Activated CD8-positive, alpha-beta T cell treated with anti-CD3 and anti-CD28 coated beads for 36 hours (primary cell): ENCODE measurements at regions of chr2 and their contacts with region 1.

Region 1: GRCh38 chr2:152025678-152026287 is 73.1 kb downstream of the CACNB4 start:
- DNase-seq: peak; percentile 92
- ATAC-seq: peak; percentile 97
- H3K4me3 Mint-ChIP-seq: peak overlapping the region; percentile 71
- H3K27ac Mint-ChIP-seq: peak overlapping the region; percentile 62
- H3K4me1 Mint-ChIP-seq: peaks cover 5% of the 10 kb centered on the region
- H3K27me3 Mint-ChIP-seq: peaks cover 10% of the 10 kb centered on the region
- CTCF ChIP-seq: peak; percentile 99

Region 2: DNA sequence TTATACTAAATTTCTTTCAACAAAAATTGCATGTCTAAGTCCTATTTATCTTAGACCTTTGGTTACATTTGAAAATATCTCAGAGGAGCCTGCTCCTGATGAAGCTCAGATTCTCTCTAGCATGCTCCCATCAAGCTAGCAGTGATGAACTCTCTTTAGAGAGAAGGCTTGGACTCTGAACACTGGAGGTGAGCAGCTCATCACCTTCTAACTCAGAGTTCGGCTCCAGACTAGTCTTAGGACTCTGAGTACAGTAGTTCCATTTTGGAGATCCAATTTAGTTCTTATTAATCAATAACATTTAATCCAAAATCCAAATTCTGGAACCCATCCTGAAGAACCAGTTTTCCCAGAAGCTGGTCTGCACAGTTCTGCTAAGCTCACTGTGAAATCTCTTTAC is 34.8 kb before region 1 on chr2:
- CTCF ChIA-PET with region 1: interaction called, 16 read pairs
- POLR2A ChIA-PET with region 1: no interaction called
- intact Hi-C with region 1: no loop called
- DNase-seq: no peak
- ATAC-seq: no peak
- H3K4me3 Mint-ChIP-seq: no peak overlapping the region
- H3K27ac Mint-ChIP-seq: no peak overlapping the region
- H3K4me1 Mint-ChIP-seq: no peaks in the 10 kb centered on the region
- H3K27me3 Mint-ChIP-seq: peaks cover 3% of the 10 kb centered on the region
- CTCF ChIP-seq: no peak

Region 3: GRCh38 chr2:152012697-152013096 is 13.1 kb before region 1 on chr2:
- CTCF ChIA-PET with region 1: interaction called, 65 read pairs
- POLR2A ChIA-PET with region 1: no interaction called
- intact Hi-C with region 1: no loop called
- DNase-seq: no peak
- ATAC-seq: no peak
- H3K4me3 Mint-ChIP-seq: no peak overlapping the region
- H3K27ac Mint-ChIP-seq: no peak overlapping the region
- H3K4me1 Mint-ChIP-seq: no peaks in the 10 kb centered on the region
- H3K27me3 Mint-ChIP-seq: no peaks in the 10 kb centered on the region
- CTCF ChIP-seq: no peak

Region 4: DNA sequence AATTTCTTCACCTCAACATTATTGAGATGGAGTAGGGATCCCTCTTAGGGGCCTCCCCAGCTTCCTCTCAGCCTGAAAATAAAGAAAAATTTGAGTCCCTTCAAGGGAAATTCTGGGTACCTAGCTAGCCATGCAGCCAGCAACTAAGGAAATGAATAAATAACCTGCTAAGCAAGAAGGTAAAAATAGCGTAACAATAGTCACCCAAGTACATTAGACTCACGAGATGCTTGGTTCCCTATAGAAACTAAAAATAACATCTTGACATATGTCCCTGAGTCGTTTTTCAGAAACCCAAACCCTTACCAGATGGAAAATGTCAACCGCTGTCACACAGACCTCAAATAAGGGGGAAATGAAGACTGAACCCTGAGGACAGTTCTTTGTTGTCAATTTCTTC is 21.2 kb after region 1 on chr2:
- CTCF ChIA-PET with region 1: interaction called, 19 read pairs
- POLR2A ChIA-PET with region 1: no interaction called
- intact Hi-C with region 1: no loop called
- DNase-seq: no peak
- ATAC-seq: no peak
- H3K4me3 Mint-ChIP-seq: no peak overlapping the region
- H3K27ac Mint-ChIP-seq: no peak overlapping the region
- H3K4me1 Mint-ChIP-seq: no peaks in the 10 kb centered on the region
- H3K27me3 Mint-ChIP-seq: peaks cover 4% of the 10 kb centered on the region
- CTCF ChIP-seq: no peak

Region 5: DNA sequence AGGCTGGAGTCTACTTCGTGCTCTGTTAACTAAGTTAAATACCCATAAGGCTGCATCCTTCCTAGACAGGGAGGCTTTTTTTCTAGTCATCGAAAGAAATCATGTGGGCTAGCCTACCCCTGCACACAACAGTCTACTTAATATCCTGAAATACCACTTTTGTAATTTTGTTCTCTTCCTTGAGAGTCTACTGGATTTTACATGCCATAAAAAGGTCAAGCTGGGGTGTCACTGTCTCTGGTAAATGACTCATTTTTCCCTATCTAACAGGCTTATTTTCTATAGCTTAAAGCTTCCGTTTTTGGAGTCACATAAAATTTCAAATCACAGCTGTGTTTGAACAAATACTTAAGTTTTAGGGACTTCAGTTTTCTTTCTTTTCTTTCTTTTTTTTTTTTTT is 160.5 kb after region 1 on chr2:
- CTCF ChIA-PET with region 1: no interaction called
- POLR2A ChIA-PET with region 1: no interaction called
- intact Hi-C with region 1: no loop called
- DNase-seq: no peak
- ATAC-seq: no peak
- H3K4me3 Mint-ChIP-seq: no peak overlapping the region
- H3K27ac Mint-ChIP-seq: no peak overlapping the region
- H3K4me1 Mint-ChIP-seq: no peaks in the 10 kb centered on the region
- H3K27me3 Mint-ChIP-seq: peaks cover 15% of the 10 kb centered on the region
- CTCF ChIP-seq: no peak